ENCODE measurements at regions of chr9 and their contacts with region 1.

Region 1: DNA sequence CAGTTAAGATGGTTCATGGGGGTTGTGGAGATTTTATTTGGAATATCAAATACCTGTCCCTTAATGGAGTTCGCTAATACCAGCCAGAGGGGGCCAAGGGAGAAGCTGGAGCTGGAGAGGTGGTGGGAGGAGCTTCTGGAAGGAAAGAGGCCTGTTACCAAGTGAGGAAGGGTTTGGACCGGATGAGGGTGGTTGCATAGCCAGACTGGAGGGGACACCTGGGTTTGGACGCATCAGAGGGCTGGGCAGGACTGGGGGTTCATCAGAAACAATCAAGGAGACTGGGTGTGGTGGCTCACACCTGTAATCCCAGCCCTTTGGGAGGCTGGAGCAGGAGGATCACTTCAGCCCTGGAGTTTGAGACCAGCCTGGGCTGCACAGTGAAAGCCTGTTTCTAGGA is 111.8 kb upstream of the IER5L start:
- DNase-seq: no peak
- H3K4me3 ChIP-seq: no peak overlapping the region
- H3K4me3 Mint-ChIP-seq: peak overlapping the region in 1 of 2 donors; percentile 78
- H3K27ac ChIP-seq: no peak overlapping the region
- H3K27ac Mint-ChIP-seq: no peak overlapping the region
- H3K4me1 ChIP-seq: no peaks in the 10 kb centered on the region
- H3K4me1 Mint-ChIP-seq: peaks cover 7% of the 10 kb centered on the region
- H3K27me3 ChIP-seq: peaks cover 0 to 8% of the 10 kb centered on the region in 2 donors
- H3K27me3 Mint-ChIP-seq: peaks cover 17 to 33% (median 17%) of the 10 kb centered on the region in 3 donors
- CTCF ChIP-seq: no peak

Region 2: DNA sequence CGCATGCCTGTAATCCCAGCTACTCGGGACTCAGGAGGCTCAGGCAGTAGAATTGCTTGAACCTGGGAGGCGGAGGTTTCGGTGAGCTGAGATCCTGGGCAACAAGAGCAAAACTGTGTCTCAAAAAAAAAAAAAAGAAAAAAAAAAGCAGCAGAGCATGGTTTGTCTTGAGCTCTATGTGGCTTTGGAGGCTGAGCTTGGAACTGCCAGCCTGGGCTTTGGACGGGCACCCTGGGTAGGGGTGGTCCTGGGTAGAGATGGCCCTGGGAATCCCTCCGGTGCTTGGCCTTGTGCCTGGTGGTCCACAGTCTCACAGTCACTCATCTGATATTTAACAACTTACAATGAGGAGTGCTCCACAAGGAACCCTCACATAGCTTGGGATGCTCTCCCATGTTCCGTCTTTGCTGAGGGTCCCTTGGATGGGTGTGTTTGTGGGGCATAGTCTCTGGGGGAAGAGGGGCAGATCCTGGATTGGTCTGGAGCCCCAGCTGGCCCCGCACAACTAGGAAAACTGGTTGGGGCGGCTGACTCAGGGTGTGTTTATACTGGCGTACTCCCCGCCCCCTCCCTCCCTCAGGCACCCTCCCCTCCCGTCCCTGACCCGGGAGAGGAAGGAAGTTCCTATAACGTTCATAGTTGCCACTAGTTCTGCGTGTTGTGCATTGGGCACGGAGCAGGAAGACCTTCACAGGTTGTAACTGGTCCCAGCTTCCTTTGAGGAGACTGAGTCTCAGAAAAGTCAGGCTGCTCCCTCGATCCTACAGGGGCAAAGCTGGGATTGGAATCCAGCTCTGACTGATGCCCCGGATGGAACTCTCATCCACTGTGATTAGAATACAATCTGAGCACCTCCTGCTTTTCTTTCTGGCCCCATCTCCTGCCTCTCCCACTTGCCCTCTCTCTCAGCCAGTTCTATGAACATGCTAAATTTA is 123.0 kb before region 1 on chr9:
- intact Hi-C with region 1: loop called in 1 of 2 experiments (anchors 10 kb)
- DNase-seq: peak; percentile 65 to 78 (median 75)
- H3K4me3 ChIP-seq: peak overlapping the region; percentile 19 to 70 (median 22)
- H3K4me3 Mint-ChIP-seq: peak overlapping the region; percentile 73 to 83
- H3K27ac ChIP-seq: peak overlapping the region; percentile 42 to 70
- H3K27ac Mint-ChIP-seq: peak overlapping the region; percentile 65 to 91 (median 80)
- H3K4me1 ChIP-seq: peaks cover 58 to 69% of the 10 kb centered on the region in 2 donors
- H3K4me1 Mint-ChIP-seq: peaks cover 64% of the 10 kb centered on the region
- H3K27me3 ChIP-seq: no peaks in the 10 kb centered on the region
- H3K27me3 Mint-ChIP-seq: peaks cover 0 to 2% (median 1%) of the 10 kb centered on the region in 3 donors
- CTCF ChIP-seq: no peak